Heart left ventricle (tissue), 16 donors: ENCODE measurements at regions of chr16 and their contacts with region 1.

Region 1: GRCh38 chr16:30628627-30629540 is 18.7 kb upstream of the ZNF689 start:
- DNase-seq: peak; percentile 77 to 91 (median 86)
- ATAC-seq: peak; percentile 63 to 91 (median 90)
- H3K4me3 ChIP-seq: peak overlapping the region in 9 of 12 donors; percentile 15 to 45 (median 34)
- H3K27ac ChIP-seq: peak overlapping the region in 8 of 12 donors; percentile 34 to 67 (median 55)
- H3K4me1 ChIP-seq: peaks cover 0 to 16% (median 1%) of the 10 kb centered on the region in 12 donors
- H3K27me3 ChIP-seq: no peaks in the 10 kb centered on the region
- CTCF ChIP-seq: peak; percentile 82 to 95 (median 90)
- POLR2A ChIP-seq: no peak

Region 2: GRCh38 chr16:30355144-30355894 is 273.6 kb before region 1 on chr16 and contains the start of gene CD2BP2:
- intact Hi-C with region 1: no loop called
- DNase-seq: peak; percentile 95 to 98 (median 97)
- ATAC-seq: peak; percentile 89 to 96 (median 92)
- H3K4me3 ChIP-seq: peak within 1 kb of the TSS; percentile 68 to 99 (median 85)
- H3K27ac ChIP-seq: peak within 1 kb of the TSS; percentile 91 to 99 (median 94)
- H3K4me1 ChIP-seq: peaks cover 12 to 47% (median 37%) of the 10 kb centered on the region in 12 donors
- H3K27me3 ChIP-seq: no peaks in the 10 kb centered on the region
- CTCF ChIP-seq: peak in 1 of 12 donors; percentile 9
- POLR2A ChIP-seq: peak in 1 of 2 donors; percentile 40
- total RNA-seq, gene CD2BP2: 21.5 to 54.5 (median 39.8) TPM

Region 3: DNA sequence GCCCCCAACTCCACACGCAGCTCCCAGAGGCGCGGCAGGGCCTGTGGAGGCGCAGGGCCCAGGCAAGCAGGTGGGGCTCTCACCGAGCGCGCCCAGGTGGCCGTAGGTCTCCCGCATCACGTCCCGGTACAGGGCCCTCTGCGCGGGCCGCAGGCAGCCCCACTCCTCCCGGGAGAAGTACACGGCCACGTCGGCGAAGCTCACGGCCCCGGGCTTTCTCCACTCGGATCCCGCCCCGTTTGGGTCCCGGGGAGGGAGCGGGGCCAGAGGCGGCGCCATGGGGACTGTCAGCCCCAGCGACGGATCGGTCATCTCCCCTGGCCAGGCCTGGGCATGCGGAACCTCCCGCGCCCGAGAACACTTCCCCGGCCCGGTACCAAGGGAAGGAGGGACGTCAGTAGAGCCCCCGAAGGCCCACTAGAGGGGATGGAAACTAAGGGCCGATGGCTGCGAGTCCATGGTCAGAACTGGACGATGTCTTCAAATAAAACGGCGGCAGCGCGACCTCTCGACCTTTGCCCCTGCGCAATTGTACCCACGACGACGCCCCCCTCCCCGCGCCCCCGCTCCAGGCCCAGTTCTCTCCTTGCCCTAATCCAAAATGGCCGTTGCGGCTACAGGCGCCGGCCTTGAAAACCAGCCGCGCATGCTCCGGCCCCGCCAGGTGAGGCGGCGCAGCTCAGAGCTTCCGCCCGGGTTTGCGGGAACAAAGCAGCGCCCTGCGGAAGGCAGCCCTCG is 94.3 kb before region 1 on chr16 and contains the start of gene ZNF747:
- intact Hi-C with region 1: loop called in 2 of 10 experiments (anchors 10 kb)
- DNase-seq: peak; percentile 95 to 96 (median 96)
- ATAC-seq: peak; percentile 88 to 95 (median 90)
- H3K4me3 ChIP-seq: peak within 1 kb of the TSS; percentile 31 to 94 (median 82)
- H3K27ac ChIP-seq: peak within 1 kb of the TSS; percentile 86 to 99 (median 94)
- H3K4me1 ChIP-seq: peaks cover 0 to 34% (median 21%) of the 10 kb centered on the region in 12 donors
- H3K27me3 ChIP-seq: no peaks in the 10 kb centered on the region
- CTCF ChIP-seq: peak in 2 of 12 donors; percentile 12 to 13
- POLR2A ChIP-seq: peak in 1 of 2 donors; percentile 63
- total RNA-seq, gene ZNF747: 8.6 to 15.2 (median 10.5) TPM

Region 4: GRCh38 chr16:30609926-30610839 is 18.7 kb before region 1 on chr16 and contains the start of gene ZNF689:
- intact Hi-C with region 1: loop called in 1 of 10 experiments (anchors 2 kb)
- DNase-seq: peak; percentile 93 to 95 (median 94)
- ATAC-seq: peak; percentile 95 to 99 (median 97)
- H3K4me3 ChIP-seq: peak within 1 kb of the TSS; percentile 64 to 99 (median 88)
- H3K27ac ChIP-seq: peak within 1 kb of the TSS; percentile 84 to 99 (median 97)
- H3K4me1 ChIP-seq: peaks cover 0 to 47% (median 10%) of the 10 kb centered on the region in 12 donors
- H3K27me3 ChIP-seq: no peaks in the 10 kb centered on the region
- CTCF ChIP-seq: peak in 1 of 12 donors; percentile 10
- POLR2A ChIP-seq: peak in 1 of 2 donors; percentile 50
- total RNA-seq, gene ZNF689: 4.0 to 7.9 (median 6.6) TPM

Region 5: DNA sequence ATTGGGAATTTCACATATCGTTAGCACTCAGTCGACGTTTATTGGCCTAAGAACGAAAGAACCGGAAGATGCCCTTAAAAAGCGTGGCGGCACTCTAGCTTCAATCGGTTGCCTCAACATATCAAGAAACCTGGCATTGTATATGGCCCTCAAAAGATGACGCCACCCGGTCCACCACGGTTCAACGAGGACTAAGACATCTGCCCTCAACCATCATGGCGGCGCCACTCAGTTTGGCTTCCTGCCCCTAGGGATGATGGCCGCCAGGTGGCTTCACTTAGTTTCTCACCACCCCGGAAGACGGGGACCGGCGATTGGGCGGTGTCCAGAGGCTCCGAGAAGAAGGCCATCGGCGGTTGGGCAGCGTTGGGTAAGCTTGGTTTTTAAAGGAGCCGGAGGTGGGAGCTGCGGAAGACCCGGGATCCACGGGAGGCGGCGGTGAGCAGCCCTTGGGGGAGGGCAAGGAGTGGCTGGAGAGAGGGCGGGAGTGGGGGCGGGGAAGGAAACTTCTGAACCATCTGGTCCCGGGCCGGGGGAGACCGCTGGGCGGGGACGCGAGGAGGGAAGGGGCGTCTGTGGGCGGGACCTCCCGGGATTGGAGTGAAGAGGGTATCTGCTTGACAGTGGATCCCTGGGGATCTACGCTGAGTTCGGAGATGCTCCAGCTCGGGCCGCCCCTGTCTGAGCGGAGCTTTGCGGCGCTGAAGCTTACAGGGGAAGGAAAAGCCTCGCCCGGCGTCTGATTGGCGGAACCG is 21.7 kb after region 1 on chr16 and contains the start of gene PRR14:
- intact Hi-C with region 1: loop called in 2 of 10 experiments (anchors 1 kb)
- DNase-seq: peak; percentile 100
- ATAC-seq: peak; percentile 92 to 95 (median 93)
- H3K4me3 ChIP-seq: peak within 1 kb of the TSS; percentile 60 to 93 (median 76)
- H3K27ac ChIP-seq: peak within 1 kb of the TSS; percentile 69 to 99 (median 95)
- H3K4me1 ChIP-seq: peaks cover 0 to 26% (median 14%) of the 10 kb centered on the region in 12 donors
- H3K27me3 ChIP-seq: no peaks in the 10 kb centered on the region
- CTCF ChIP-seq: peak in 10 of 12 donors; percentile 19 to 54 (median 34)
- POLR2A ChIP-seq: peak in 1 of 2 donors; percentile 32
- total RNA-seq, gene PRR14: 12.3 to 26.6 (median 20.2) TPM